Breast epithelium (tissue), 4 donors: ENCODE measurements at regions of chr17 and their contacts with region 1.

Region 1: DNA sequence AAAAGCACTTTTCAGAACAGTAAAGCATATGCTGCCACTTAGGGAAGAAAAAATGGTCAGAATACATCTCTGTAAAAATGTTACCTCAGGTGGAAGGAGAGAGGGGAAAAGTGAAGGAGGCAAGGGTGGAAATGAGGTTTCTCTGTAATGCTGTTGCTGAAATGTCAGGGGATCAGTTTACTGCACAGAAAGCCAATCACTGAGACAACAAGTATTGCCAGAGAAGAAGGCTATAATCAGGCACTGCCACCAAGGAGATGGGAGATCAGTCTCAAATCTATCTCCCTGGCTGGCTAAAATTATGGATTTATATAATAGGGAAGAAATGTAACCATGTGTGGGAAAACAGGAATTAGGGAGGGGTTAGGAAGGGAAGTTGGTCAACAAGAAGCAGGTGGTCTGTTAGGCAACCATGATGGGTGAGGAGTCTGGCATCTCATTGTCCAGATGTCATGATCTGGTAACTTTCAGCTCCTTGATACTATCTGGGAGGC is 27.7 kb upstream of the GUCY2D start:
- DNase-seq: no peak
- H3K4me3 ChIP-seq: no peak overlapping the region
- H3K27ac ChIP-seq: no peak overlapping the region
- H3K4me1 ChIP-seq: no peaks in the 10 kb centered on the region
- H3K27me3 ChIP-seq: no peaks in the 10 kb centered on the region
- CTCF ChIP-seq: no peak
- POLR2A ChIP-seq: no peak

Region 2: GRCh38 chr17:7929158-7930023 is 45.3 kb before region 1 on chr17 and contains the start of gene KCNAB3:
- intact Hi-C with region 1: loop called (anchors 2 kb)
- DNase-seq: peak in 1 of 2 donors; percentile 64
- H3K4me3 ChIP-seq: peak within 1 kb of the TSS in 2 of 3 donors; percentile 68 to 93
- H3K27ac ChIP-seq: no peak within 1 kb of the TSS
- H3K4me1 ChIP-seq: peaks cover 0 to 14% of the 10 kb centered on the region in 2 donors
- H3K27me3 ChIP-seq: no peaks in the 10 kb centered on the region
- CTCF ChIP-seq: no peak
- POLR2A ChIP-seq: no peak
- total RNA-seq, gene KCNAB3: 0.48 to 1.5 (median 1.3) TPM